ENCODE measurements at regions of chr17 and their contacts with region 1.

Region 1: DNA sequence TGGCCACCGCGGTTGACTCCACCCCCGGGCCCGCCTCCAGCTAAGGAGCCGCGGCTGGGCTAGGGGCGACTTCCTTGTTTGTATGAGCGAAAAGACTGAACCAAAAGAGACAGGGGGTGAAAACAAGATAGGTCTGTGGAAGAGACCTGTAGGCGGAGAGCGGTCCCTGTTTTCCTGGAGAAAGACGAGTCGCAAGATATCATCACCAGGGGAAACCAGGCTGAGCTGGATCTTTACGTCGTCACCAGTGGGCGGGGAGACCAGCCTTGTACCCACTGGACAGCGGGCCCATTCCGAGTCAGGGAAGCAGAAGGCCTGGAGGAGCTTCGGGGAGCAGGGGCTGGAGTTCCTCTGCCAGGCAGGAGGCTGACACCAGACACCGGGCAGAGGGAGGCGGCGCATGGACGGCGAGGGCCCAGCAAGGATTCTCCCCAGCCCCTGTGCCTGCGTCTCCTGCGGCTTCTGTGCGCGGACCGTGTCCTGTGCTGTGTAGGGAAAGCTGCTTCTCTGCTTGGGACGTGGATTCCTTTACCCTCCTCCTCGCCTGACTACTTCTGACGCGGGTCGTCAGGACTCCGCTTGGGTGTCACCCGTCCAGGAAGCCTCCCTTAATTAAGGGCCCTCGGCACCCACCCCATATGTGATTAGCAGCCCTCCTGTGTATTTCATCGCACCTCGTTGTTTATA is 10.3 kb upstream of the ARL4D start:
- DNase-seq: peak; percentile 86
- CTCF ChIP-seq: no peak

Region 2: GRCh38 chr17:43360739-43361505 is 27.6 kb before region 1 on chr17:
- CTCF ChIA-PET with region 1: interaction called, 4 read pairs
- POLR2A ChIA-PET with region 1: interaction called, 79 read pairs
- DNase-seq: peak; percentile 84
- CTCF ChIP-seq: no peak

Region 3: DNA sequence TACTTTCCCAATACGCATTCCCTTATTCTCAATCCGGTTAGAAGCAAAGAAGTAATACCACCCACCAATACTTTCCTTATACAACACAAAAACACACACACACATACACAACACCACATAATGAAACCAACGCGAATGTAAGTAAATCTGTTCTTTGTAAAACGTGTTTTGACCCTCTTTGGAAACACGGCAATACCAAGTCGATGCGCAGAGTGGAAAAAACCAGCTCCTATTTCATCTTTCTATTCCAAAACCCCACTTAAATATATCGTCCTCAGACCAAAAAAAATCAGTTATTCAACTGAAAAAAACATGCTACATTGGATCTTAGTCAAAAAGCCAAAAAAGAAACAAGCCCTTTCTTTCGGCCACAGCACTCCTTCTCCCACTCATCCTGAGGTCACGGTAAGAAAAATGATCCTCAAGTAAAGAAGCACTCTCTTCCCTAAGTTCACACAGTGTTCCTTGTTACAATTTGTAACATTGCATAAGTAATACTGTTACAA is 20.7 kb before region 1 on chr17:
- CTCF ChIA-PET with region 1: interaction called, 11 read pairs
- POLR2A ChIA-PET with region 1: interaction called, 79 read pairs
- DNase-seq: peak; percentile 60
- CTCF ChIP-seq: no peak

Region 4: DNA sequence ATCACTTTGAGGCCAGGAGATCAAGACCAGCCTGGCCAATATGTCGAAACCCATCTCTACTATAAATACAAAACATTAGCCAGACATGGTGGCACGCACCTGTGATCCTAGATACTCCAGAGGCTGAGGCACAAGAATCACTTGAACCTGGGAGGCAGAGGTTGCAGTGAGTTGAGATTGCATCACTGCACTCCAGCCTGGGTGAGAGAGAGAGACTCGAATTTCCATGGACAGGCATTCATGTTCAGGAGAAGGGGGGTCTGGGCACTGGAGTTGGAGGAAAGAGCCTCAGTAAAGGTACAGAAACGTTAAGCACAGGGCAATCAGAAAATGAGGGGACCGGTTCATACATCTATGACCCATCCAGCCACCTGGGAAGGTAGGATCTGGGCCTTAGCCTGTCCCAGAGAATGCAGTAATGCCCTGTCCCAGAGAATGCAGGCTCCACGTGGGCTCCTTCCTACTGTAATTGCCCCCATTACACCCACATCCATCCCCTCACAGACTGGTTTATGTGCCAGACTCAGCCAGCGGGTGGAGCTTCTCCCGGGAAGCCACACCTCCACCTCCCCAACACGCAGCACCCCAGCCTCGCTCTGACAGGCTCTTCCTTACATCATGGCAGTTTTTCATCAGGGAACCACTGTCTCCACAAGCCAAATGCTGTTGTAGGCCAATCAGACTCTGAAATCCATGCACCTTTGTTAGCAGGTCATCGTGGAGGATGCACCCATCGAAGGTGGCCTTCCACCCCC is 11.3 kb before region 1 on chr17:
- CTCF ChIA-PET with region 1: interaction called, 11 read pairs
- POLR2A ChIA-PET with region 1: no interaction called
- DNase-seq: no peak
- CTCF ChIP-seq: no peak

Region 5: GRCh38 chr17:44324571-44325275 is 936.2 kb after region 1 on chr17 and contains the start of gene SLC25A39:
- CTCF ChIA-PET with region 1: no interaction called
- POLR2A ChIA-PET with region 1: no interaction called
- DNase-seq: peak; percentile 94
- CTCF ChIP-seq: no peak

Measured in GM10248 (cell line).